B cell (primary cell): ENCODE measurements at regions of chr17 and their contacts with region 1.

Region 1: DNA sequence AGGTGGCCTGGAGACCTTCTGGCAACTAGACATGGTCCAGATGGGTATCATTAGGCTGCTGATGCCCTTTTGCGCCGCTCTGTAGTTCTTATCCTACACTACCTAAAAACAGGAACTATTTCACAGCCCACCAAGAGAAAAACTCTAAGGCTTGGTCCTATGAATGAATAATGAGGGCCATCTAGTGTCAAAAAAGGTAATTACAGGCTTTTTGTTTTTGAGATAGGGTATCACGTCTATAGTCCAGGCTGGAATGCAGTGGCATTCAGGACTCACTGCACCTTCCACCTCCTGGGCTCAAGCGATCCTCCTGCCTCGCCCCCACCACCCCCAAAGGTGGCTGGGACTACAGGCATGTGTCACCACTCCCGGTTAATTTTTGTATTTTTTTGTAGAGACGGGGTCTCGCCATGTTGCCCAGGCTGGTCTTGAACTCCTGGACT is 20.9 kb downstream of the COIL start:
- DNase-seq: peak; percentile 83
- ATAC-seq: peak; percentile 91
- H3K4me3 ChIP-seq: no peak overlapping the region
- H3K4me3 Mint-ChIP-seq: no peak overlapping the region
- H3K27ac ChIP-seq: no peak overlapping the region
- H3K27ac Mint-ChIP-seq: no peak overlapping the region
- H3K4me1 ChIP-seq: peaks cover 0 to 3% of the 10 kb centered on the region in 2 donors
- H3K4me1 Mint-ChIP-seq: peaks cover 4% of the 10 kb centered on the region
- H3K27me3 ChIP-seq: no peaks in the 10 kb centered on the region
- H3K27me3 Mint-ChIP-seq: no peaks in the 10 kb centered on the region
- CTCF ChIP-seq: peak; percentile 84

Region 2: GRCh38 chr17:56891784-56892183 is 48.1 kb before region 1 on chr17:
- CTCF ChIA-PET with region 1: interaction called, 34 read pairs
- POLR2A ChIA-PET with region 1: no interaction called
- intact Hi-C with region 1: loop called (anchors 1 kb)
- DNase-seq: peak; percentile 57
- ATAC-seq: peak; percentile 49
- H3K4me3 ChIP-seq: no peak overlapping the region
- H3K4me3 Mint-ChIP-seq: no peak overlapping the region
- H3K27ac ChIP-seq: no peak overlapping the region
- H3K27ac Mint-ChIP-seq: no peak overlapping the region
- H3K4me1 ChIP-seq: peaks cover 5 to 7% of the 10 kb centered on the region in 2 donors
- H3K4me1 Mint-ChIP-seq: peaks cover 6% of the 10 kb centered on the region
- H3K27me3 ChIP-seq: no peaks in the 10 kb centered on the region
- H3K27me3 Mint-ChIP-seq: no peaks in the 10 kb centered on the region
- CTCF ChIP-seq: peak; percentile 64